ENCODE measurements at regions of chr13 and their contacts with region 1.

Region 1: DNA sequence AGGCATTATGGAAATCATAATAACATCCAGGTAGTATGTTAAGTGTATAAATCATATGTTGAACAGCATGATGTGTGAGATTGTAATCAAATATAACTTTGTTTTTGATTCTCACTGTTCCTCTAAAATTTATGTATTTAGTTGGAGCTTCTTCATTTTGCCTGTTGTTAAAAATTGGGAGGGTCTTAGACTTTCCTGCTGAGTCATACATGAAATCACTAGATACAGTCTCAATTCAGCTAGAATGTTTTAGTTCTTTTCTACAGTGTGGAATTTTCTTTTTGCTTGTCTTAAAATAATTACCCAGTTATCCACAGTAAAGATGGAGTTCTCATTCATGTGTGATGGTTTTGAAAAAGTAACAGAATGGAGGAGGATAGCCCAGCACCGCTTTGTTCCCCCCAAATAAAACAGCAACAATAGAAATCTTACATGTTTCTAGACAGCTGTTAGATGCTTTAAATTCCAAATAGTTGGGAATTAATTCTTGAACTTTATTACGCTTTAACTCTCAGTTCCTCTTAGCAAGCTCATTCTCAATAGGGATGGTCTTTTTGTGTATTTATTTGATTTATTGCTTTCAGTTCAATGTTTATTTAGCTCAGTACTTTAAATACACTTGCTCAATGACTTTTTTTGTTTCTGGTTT is 109.5 kb downstream of the PDS5B start:
- DNase-seq: peak; percentile 2
- ATAC-seq: 0 out of 2 replicates have a peak, but pooled peaks have one; percentile 49
- H3K4me3 ChIP-seq: no peak overlapping the region
- H3K27ac ChIP-seq: no peak overlapping the region
- H3K4me1 ChIP-seq: no peaks in the 10 kb centered on the region
- H3K27me3 ChIP-seq: no peaks in the 10 kb centered on the region
- CTCF ChIP-seq: no peak
- POLR2A ChIP-seq: no peak
- RAD21 ChIP-seq: no peak

Region 2: GRCh38 chr13:32216286-32216685 is 479.4 kb before region 1 on chr13:
- CTCF ChIA-PET with region 1: no interaction called
- POLR2A ChIA-PET with region 1: no interaction called
- dilution Hi-C with region 1: no loop called
- in situ Hi-C with region 1: no loop called
- intact Hi-C with region 1: no loop called
- DNase-seq: no peak
- ATAC-seq: no peak
- H3K4me3 ChIP-seq: no peak overlapping the region
- H3K27ac ChIP-seq: no peak overlapping the region
- H3K4me1 ChIP-seq: peaks cover 13% of the 10 kb centered on the region
- H3K27me3 ChIP-seq: no peaks in the 10 kb centered on the region
- CTCF ChIP-seq: no peak
- POLR2A ChIP-seq: no peak
- RAD21 ChIP-seq: no peak

Region 3: GRCh38 chr13:32639502-32640105 is 56.1 kb before region 1 on chr13:
- CTCF ChIA-PET with region 1: no interaction called
- POLR2A ChIA-PET with region 1: no interaction called
- dilution Hi-C with region 1: no loop called
- in situ Hi-C with region 1: no loop called
- intact Hi-C with region 1: loop called (anchors 10 kb)
- DNase-seq: peak; percentile 77
- ATAC-seq: peak; percentile 93
- H3K4me3 ChIP-seq: no peak overlapping the region
- H3K27ac ChIP-seq: no peak overlapping the region
- H3K4me1 ChIP-seq: no peaks in the 10 kb centered on the region
- H3K27me3 ChIP-seq: no peaks in the 10 kb centered on the region
- CTCF ChIP-seq: peak; percentile 77
- POLR2A ChIP-seq: no peak
- RAD21 ChIP-seq: peak; percentile 72

Region 4: DNA sequence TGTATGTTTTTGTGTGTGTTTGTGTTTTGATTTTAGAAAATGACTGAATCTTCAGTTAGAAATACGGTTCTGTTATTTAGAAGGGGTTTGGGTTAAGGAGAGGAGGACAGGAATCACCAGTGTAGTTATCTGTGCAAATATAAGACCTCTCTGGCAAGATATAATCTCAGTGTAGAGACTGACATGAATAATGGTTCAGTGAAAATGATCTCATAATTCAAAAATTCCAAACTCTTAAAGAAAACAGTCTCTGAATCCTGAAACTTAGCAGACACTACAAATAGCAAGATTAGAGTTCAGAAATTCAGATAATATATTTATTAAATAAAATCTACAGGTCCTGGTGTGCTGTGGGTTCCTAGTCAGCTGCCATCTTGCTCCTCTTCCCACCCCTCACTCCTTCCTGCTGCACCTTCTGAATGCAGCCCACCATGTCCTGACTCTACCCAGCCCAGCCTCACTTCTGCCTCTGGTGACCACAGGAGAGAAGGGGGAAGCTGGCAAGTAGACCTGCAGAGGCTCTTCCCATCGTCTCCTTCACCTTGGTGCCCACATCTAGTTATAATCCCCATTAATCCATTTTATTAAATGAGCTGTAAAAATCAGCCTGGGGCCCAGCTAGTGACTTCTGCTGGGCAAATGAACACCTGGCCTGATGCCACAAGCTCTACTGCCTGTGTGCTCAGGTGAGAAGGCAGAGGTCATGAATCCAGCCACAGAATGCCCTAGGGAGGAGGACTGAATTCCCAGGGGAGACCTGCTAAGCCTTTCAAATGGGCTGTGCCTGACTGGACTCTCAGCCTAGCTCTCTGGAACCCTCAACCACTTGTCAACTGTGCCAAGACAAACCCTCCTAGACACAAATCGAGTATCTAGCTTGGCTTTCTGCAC is 35.7 kb before region 1 on chr13:
- CTCF ChIA-PET with region 1: no interaction called
- POLR2A ChIA-PET with region 1: no interaction called
- dilution Hi-C with region 1: no loop called
- in situ Hi-C with region 1: no loop called
- intact Hi-C with region 1: loop called (anchors 1 kb)
- DNase-seq: peak; percentile 25
- ATAC-seq: peak; percentile 29
- H3K4me3 ChIP-seq: no peak overlapping the region
- H3K27ac ChIP-seq: no peak overlapping the region
- H3K4me1 ChIP-seq: peaks cover 2% of the 10 kb centered on the region; the same call in 1 of the 2 replicates
- H3K27me3 ChIP-seq: no peaks in the 10 kb centered on the region
- CTCF ChIP-seq: no peak
- POLR2A ChIP-seq: no peak
- RAD21 ChIP-seq: no peak

Region 5: DNA sequence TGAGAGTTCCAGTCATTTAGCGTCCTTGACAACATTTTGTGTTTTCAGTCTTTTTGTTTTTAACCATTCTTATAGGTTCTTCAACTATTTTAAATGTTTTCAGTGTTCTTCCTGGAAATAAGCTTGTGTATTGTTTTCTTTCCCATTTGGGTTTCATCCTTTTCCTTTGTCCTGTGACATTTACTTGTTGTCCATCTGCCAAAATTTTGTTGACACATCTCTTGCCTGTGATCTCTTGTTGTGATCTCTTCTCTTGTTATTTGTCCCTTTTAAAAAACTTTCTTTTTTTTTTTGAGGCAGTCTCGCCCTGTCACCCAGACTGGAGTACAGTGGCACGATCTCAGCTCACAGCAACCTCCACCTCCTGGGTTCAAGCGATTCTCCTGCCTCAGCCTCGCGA is 13.0 kb before region 1 on chr13:
- CTCF ChIA-PET with region 1: interaction called, 4 read pairs
- POLR2A ChIA-PET with region 1: interaction called, 13 read pairs
- dilution Hi-C with region 1: no loop called
- in situ Hi-C with region 1: no loop called
- intact Hi-C with region 1: no loop called
- DNase-seq: no peak
- ATAC-seq: no peak
- H3K4me3 ChIP-seq: no peak overlapping the region
- H3K27ac ChIP-seq: no peak overlapping the region
- H3K4me1 ChIP-seq: no peaks in the 10 kb centered on the region
- H3K27me3 ChIP-seq: no peaks in the 10 kb centered on the region
- CTCF ChIP-seq: no peak
- POLR2A ChIP-seq: no peak
- RAD21 ChIP-seq: no peak